CD14-positive monocyte (primary cell): ENCODE measurements at regions of chr14 and their contacts with region 1.

Region 1: DNA sequence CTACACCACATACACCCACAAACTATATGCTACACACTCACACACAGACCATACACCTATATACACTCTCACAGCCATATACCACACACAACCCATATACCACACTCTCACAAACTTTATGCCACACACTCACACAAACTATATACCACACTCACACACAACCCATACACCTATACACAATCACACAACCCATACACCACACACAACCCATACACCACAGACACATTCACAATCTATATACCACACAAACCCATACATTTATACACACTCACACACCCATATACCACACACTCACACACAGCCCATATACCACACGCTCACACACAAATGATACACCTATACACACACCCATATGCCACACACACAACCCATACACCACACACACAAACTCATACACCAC is 163.3 kb downstream of the TMEM121 start:
- DNase-seq: no peak
- H3K4me3 ChIP-seq: no peak overlapping the region
- H3K4me3 Mint-ChIP-seq: no peak overlapping the region
- H3K27ac ChIP-seq: no peak overlapping the region
- H3K27ac Mint-ChIP-seq: no peak overlapping the region
- H3K4me1 ChIP-seq: no peaks in the 10 kb centered on the region
- H3K4me1 Mint-ChIP-seq: no peaks in the 10 kb centered on the region
- H3K27me3 ChIP-seq: no peaks in the 10 kb centered on the region
- H3K27me3 Mint-ChIP-seq: peaks cover 2 to 4% (median 2%) of the 10 kb centered on the region in 3 donors
- CTCF ChIP-seq: no peak

Region 2: DNA sequence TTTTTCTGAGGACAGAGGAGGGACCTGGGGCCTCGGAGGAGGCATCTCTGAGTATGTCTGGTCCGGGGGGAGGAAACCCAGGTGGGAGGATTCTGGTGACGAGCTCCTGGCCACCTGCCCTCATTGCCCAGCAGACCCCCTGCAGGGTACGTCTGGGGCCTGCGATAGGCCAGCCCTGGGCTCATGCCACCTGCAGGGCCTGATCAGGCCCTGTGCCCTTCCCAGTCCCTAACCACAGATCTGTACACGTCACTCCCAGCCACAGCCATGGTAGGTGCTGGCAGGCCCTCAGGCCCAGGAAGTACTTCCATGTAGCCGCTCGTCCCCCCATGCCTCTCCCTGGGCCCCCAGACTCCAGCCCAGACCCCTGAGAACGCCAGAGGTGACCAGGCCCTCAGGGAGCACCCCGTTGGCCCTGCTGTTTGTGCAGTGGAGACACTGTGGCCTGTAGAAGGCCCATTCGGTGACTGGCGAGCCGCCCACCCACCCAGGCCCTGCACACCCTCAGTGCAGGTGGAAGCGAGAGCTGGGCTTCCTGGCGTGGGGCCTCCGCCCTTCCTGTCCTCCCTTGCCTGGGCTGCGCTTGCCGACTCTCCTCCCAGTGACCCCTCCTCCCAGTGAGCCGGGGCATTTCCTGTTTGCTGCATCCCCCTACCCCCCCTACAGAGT is 994.6 kb before region 1 on chr14:
- intact Hi-C with region 1: no loop called
- DNase-seq: no peak
- H3K4me3 ChIP-seq: peak overlapping the region in 1 of 3 experiments; percentile 14
- H3K4me3 Mint-ChIP-seq: no peak overlapping the region
- H3K27ac ChIP-seq: peak overlapping the region in 1 of 2 donors; percentile 71
- H3K27ac Mint-ChIP-seq: peak overlapping the region in 5 of 7 donors; percentile 16 to 79 (median 69)
- H3K4me1 ChIP-seq: peaks cover 18 to 39% of the 10 kb centered on the region in 2 donors
- H3K4me1 Mint-ChIP-seq: peaks cover 34% of the 10 kb centered on the region
- H3K27me3 ChIP-seq: no peaks in the 10 kb centered on the region
- H3K27me3 Mint-ChIP-seq: peaks cover 0 to 2% (median 0%) of the 10 kb centered on the region in 3 donors
- CTCF ChIP-seq: no peak

Region 3: GRCh38 chr14:105568859-105569708 is 120.6 kb before region 1 on chr14:
- intact Hi-C with region 1: loop called (anchors 5 to 10 kb)
- DNase-seq: no peak
- H3K4me3 ChIP-seq: no peak overlapping the region
- H3K4me3 Mint-ChIP-seq: no peak overlapping the region
- H3K27ac ChIP-seq: no peak overlapping the region
- H3K27ac Mint-ChIP-seq: no peak overlapping the region
- H3K4me1 ChIP-seq: no peaks in the 10 kb centered on the region
- H3K4me1 Mint-ChIP-seq: no peaks in the 10 kb centered on the region
- H3K27me3 ChIP-seq: no peaks in the 10 kb centered on the region
- H3K27me3 Mint-ChIP-seq: peaks cover 0 to 2% (median 0%) of the 10 kb centered on the region in 3 donors
- CTCF ChIP-seq: no peak

Region 4: DNA sequence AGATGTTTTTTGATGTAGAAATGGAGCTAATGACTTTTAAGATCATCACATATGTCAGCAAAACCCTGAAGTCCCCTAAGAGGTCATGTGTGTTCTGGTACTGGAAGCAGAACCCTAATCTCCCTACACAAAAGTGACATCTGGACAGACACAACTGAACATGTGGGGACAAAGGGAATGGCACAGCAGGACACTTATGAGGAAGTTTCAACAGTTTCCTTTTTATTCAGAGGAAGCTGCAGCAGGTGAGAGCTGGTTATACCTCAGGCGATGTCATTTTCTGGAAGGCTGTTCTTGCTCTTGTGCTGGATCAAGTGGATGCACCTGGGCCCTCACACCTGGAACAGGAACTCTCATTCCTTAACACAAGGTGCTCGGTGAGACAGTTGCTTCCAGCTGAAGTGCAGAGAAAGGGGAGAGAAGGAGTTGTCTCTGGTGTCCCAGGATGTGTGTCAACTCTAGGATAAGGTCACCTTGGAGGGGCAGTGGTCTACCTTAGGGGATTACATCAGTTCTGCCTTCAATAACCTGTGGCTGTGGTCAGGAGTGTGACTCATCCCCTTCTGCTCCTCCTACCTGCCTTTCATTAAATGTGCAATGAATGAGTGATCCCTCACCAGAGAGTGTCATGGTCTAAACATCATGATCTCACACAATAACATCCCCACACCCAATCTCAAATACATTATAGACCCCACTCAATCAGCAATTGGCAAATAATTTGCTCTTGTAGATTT is 300.0 kb after region 1 on chr14:
- intact Hi-C with region 1: no loop called
- DNase-seq: no peak
- H3K4me3 ChIP-seq: no peak overlapping the region
- H3K4me3 Mint-ChIP-seq: no peak overlapping the region
- H3K27ac ChIP-seq: no peak overlapping the region
- H3K27ac Mint-ChIP-seq: no peak overlapping the region
- H3K4me1 ChIP-seq: no peaks in the 10 kb centered on the region
- H3K4me1 Mint-ChIP-seq: peaks cover 4% of the 10 kb centered on the region
- H3K27me3 ChIP-seq: no peaks in the 10 kb centered on the region
- H3K27me3 Mint-ChIP-seq: peaks cover 0 to 1% (median 0%) of the 10 kb centered on the region in 3 donors
- CTCF ChIP-seq: no peak

Region 5: GRCh38 chr14:106422066-106422465 is 732.3 kb after region 1 on chr14:
- intact Hi-C with region 1: no loop called
- DNase-seq: no peak
- H3K4me3 ChIP-seq: no peak overlapping the region
- H3K4me3 Mint-ChIP-seq: no peak overlapping the region
- H3K27ac ChIP-seq: no peak overlapping the region
- H3K27ac Mint-ChIP-seq: no peak overlapping the region
- H3K4me1 ChIP-seq: peaks cover 9 to 19% of the 10 kb centered on the region in 2 donors
- H3K4me1 Mint-ChIP-seq: peaks cover 21% of the 10 kb centered on the region
- H3K27me3 ChIP-seq: no peaks in the 10 kb centered on the region
- H3K27me3 Mint-ChIP-seq: no peaks in the 10 kb centered on the region
- CTCF ChIP-seq: no peak